Common myeloid progenitor, CD34-positive (primary cell): ENCODE measurements at regions of chr3 and their contacts with region 1.

Region 1: GRCh38 chr3:192423003-192423349 is 304.4 kb downstream of the FGF12 start:
- DNase-seq: peak; percentile 25 to 37 (median 36)
- H3K4me3 ChIP-seq: no peak overlapping the region
- H3K27ac ChIP-seq: no peak overlapping the region
- H3K4me1 ChIP-seq: no peaks in the 10 kb centered on the region
- H3K27me3 ChIP-seq: peaks cover 0 to 8% (median 2%) of the 10 kb centered on the region in 5 experiments

Region 2: GRCh38 chr3:191809326-191809949 is 613.5 kb before region 1 on chr3:
- CTCF ChIA-PET with region 1: no interaction called
- POLR2A ChIA-PET with region 1: no interaction called
- DNase-seq: no peak
- H3K4me3 ChIP-seq: no peak overlapping the region
- H3K27ac ChIP-seq: no peak overlapping the region
- H3K4me1 ChIP-seq: no peaks in the 10 kb centered on the region
- H3K27me3 ChIP-seq: no peaks in the 10 kb centered on the region

Region 3: DNA sequence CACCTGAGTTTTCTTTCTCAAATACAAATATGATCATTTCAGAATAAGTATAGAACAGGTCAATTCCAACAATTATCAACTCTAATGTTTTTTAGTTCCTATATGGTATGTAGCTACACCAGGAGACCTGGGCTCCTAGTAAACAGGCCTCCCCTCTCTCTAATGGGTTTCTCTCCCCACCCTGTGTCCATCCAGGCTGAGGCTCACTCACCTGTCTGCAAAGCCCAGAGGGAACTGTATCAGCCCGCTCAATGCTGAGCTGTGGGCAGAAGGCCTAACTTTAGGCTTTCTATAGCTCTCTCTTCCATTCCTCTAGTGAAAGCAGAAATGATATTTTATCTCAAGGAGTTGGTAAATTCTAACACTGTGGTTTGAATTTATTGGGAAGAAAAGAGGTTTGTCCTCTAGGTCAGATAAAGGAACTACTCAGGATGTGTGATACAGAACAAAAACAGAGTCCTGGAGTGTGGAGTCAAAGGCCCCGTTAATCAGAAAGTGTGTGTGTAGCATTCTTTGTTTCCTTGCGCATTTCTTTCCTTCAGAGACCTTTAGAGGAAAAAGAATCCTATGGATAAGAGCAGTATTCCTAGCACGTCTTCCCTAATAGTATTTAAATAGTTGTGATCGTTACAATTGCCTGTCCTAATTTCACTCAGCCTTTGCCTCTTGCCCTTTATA is 553.1 kb before region 1 on chr3:
- CTCF ChIA-PET with region 1: no interaction called
- POLR2A ChIA-PET with region 1: no interaction called
- DNase-seq: no peak
- H3K4me3 ChIP-seq: no peak overlapping the region
- H3K27ac ChIP-seq: no peak overlapping the region
- H3K4me1 ChIP-seq: no peaks in the 10 kb centered on the region
- H3K27me3 ChIP-seq: no peaks in the 10 kb centered on the region

Region 4: DNA sequence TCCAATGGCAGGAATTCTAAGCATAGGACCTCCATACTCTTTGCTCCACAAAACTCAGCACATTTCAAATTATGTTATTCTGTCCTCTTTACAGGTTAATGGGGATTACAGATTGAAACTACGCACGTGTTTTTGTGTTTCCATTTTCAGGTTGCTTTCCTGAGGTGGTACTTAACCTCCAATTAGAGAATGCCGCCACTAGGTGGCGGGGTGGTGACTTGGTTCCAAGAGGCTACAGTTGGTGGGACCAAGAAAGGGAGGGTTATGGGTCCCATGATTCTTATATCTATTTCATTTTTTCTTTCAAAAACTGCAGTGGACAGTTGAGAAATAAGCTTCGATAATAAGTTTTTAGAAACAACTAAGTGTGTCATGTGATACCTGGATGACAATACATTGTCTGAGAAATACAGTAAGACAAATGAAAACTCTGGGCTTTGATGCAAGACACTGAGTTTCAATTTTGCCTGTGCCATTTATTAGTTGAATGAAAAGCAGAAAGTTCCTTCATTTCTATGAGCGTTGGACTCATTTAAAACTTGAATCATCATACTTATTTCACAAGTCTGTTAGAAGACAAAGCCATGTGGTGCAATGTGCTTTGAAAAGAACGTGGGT is 234.6 kb before region 1 on chr3:
- CTCF ChIA-PET with region 1: interaction called, 47 read pairs
- POLR2A ChIA-PET with region 1: no interaction called
- DNase-seq: peak; percentile 52 to 79 (median 75)
- H3K4me3 ChIP-seq: no peak overlapping the region
- H3K27ac ChIP-seq: no peak overlapping the region
- H3K4me1 ChIP-seq: peaks cover 0 to 2% (median 0%) of the 10 kb centered on the region in 4 experiments
- H3K27me3 ChIP-seq: peaks cover 0 to 2% (median 0%) of the 10 kb centered on the region in 5 experiments

Region 5: GRCh38 chr3:192410684-192410960 is 12.4 kb before region 1 on chr3:
- CTCF ChIA-PET with region 1: interaction called, 10 read pairs
- POLR2A ChIA-PET with region 1: no interaction called
- DNase-seq: no peak
- H3K4me3 ChIP-seq: no peak overlapping the region
- H3K27ac ChIP-seq: no peak overlapping the region
- H3K4me1 ChIP-seq: peaks cover 0 to 29% (median 22%) of the 10 kb centered on the region in 4 experiments
- H3K27me3 ChIP-seq: peaks cover 9 to 79% (median 33%) of the 10 kb centered on the region in 5 experiments

Region 6: DNA sequence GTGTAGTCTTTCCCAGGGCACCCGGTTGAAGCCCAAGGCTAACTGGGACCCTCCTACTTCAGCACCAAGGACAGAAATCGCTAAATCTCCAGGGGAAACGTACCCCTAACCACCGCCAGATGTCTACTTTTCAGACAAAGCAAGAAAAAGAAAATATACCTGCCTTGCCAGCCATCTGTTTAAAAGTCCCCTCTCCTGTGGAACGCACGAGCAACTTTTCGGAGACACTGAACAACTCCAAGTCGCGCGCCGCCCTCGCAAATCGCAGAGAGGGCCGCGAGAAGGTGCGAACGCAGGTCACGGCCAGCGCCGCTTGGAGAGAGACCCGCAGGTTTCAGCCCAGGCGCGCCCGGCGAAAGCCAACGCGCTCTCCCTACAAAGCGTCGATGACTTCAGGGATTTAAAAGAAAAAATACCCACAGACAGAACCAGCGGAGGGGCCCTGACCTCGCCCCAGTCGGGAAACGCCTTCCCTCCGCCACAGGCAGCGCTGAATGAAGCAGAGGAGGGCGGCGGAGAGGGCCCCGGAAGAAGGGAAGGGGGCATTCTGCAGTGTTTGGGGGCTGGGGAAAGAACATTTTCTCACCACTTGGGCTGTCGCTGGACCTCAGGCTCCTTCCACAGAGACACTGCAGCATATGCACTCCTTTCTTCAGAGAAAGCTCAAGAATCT is 91.2 kb after region 1 on chr3:
- CTCF ChIA-PET with region 1: no interaction called
- POLR2A ChIA-PET with region 1: no interaction called
- DNase-seq: peak; percentile 51 to 79 (median 74)
- H3K4me3 ChIP-seq: peak overlapping the region in 4 of 7 experiments; percentile 31 to 66 (median 52)
- H3K27ac ChIP-seq: no peak overlapping the region
- H3K4me1 ChIP-seq: peaks cover 0 to 15% (median 7%) of the 10 kb centered on the region in 4 experiments
- H3K27me3 ChIP-seq: peaks cover 13 to 64% (median 37%) of the 10 kb centered on the region in 5 experiments

Region 7: GRCh38 chr3:192778508-192778907 is 355.5 kb after region 1 on chr3:
- CTCF ChIA-PET with region 1: no interaction called
- POLR2A ChIA-PET with region 1: no interaction called
- DNase-seq: no peak
- H3K4me3 ChIP-seq: no peak overlapping the region
- H3K27ac ChIP-seq: no peak overlapping the region
- H3K4me1 ChIP-seq: no peaks in the 10 kb centered on the region
- H3K27me3 ChIP-seq: peaks cover 0 to 2% (median 0%) of the 10 kb centered on the region in 5 experiments